Heart right ventricle (tissue), 16 donors: ENCODE measurements at regions of chr14 and their contacts with region 1.

Region 1: GRCh38 chr14:77376771-77377501 is at the starts of genes SAMD15 and TMED8:
- DNase-seq: peak; percentile 84 to 88
- ATAC-seq: peak; percentile 97 to 99 (median 98)
- H3K4me3 ChIP-seq: peak within 1 kb of the TSS; percentile 56 to 94 (median 86)
- H3K27ac ChIP-seq: peak within 1 kb of the TSS; percentile 16 to 92 (median 84)
- H3K4me1 ChIP-seq: peaks cover 0 to 28% (median 18%) of the 10 kb centered on the region in 9 donors
- H3K27me3 ChIP-seq: no peaks in the 10 kb centered on the region
- CTCF ChIP-seq: peak in 5 of 9 donors; percentile 35 to 60 (median 46)
- total RNA-seq, gene SAMD15: 0.15 to 0.30 (median 0.21) TPM in 9 of 10 donors, not detected in the other
- total RNA-seq, gene TMED8: 4.4 to 8.7 (median 7.1) TPM

Region 2: GRCh38 chr14:77320238-77320935 is 56.5 kb before region 1 on chr14 and contains the start of gene POMT2:
- intact Hi-C with region 1: loop called in 4 of 10 experiments (anchors 1 to 5 kb)
- DNase-seq: peak; percentile 93 to 95
- ATAC-seq: peak; percentile 74 to 87 (median 82)
- H3K4me3 ChIP-seq: peak within 1 kb of the TSS; percentile 76 to 100 (median 95)
- H3K27ac ChIP-seq: peak within 1 kb of the TSS; percentile 69 to 99 (median 99)
- H3K4me1 ChIP-seq: peaks cover 0 to 45% (median 25%) of the 10 kb centered on the region in 9 donors
- H3K27me3 ChIP-seq: no peaks in the 10 kb centered on the region
- CTCF ChIP-seq: peak; percentile 17 to 70 (median 48)
- total RNA-seq, gene POMT2: 10.5 to 23.4 (median 17.6) TPM